ENCODE measurements at regions of chr5 and their contacts with region 1.

Region 1: DNA sequence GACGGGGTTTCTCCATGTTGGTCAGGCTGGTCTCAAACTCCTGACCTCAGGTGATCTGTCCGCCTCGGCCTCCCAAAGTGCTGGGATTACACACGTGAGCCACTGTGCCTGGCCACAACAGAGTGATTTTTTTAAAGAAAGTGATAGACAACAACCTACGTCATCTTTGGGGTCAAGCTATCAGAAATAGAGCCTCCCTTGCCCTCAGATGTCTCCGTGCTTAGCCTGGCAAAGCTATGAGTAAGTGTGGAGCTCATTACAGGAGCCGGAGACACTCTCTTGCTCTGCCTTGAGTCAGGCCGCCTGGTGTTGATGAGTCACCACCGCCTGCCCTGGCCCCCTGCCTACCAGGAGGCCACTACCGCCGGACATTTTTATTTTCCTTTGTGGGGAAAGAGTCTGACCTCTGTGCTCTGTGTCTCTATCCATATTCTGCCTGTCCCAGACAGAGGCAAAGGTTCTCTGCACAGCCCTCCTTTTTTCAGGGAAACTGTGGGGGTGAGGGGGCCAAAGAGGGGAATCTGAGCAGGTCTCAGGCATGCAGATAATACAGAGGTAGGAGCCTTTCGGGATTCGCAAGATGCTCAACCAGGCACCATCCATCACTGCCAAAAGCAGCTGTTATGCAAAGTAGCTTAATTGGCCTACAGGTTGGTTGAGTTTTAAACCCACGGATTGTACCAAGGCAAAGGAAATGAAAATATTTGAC is 123.7 kb upstream of the CPEB4 start:
- DNase-seq: peak; percentile 76
- ATAC-seq: peak; percentile 27

Region 2: GRCh38 chr5:173615884-173616576 is 148.4 kb before region 1 on chr5:
- intact Hi-C with region 1: loop called (anchors 5 kb)
- DNase-seq: no peak
- ATAC-seq: peak; percentile 60

Region 3: GRCh38 chr5:173829817-173830216 is 65.3 kb after region 1 on chr5:
- intact Hi-C with region 1: no loop called
- DNase-seq: no peak
- ATAC-seq: no peak

Region 4: GRCh38 chr5:173859428-173860159 is 95.1 kb after region 1 on chr5:
- intact Hi-C with region 1: loop called (anchors 2 kb)
- DNase-seq: no peak
- ATAC-seq: no peak

Region 5: DNA sequence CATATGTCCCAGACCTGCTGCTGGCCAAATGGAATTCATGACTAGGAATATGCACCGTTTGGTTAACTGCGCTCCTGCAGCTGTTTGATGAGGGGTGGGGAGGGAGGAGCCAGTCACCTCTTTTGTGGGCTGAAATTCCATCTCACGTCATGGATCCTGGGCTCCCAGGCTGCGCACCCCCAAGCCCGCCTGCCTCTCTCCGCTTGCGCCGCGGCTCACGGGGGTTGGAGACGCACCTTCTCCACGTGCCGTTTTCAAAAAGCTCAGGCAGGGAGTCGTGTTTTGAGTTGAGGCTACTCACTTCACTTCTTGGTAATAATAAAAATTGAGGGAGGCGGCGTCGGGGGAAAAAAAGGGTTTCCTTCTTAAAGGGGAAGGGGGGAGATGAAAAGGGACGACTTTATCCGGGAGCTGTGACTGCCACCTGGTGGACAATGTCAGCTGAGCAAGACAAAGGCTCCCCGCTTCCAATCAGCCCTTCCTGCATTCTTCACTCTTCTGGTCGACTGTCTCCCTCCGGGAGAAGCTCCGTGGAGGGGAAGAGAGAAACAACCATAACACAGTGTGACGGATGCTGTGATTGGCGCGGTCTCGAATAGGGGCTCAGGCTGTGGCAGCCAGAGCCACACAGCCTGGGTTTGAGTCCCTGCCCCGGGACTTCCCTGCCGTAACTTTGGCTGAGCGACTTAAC is 208.6 kb after region 1 on chr5:
- intact Hi-C with region 1: loop called (anchors 5 kb)
- DNase-seq: no peak
- ATAC-seq: peak; percentile 86